Endothelial cell of umbilical vein (primary cell): ENCODE measurements at regions of chr4 and their contacts with region 1.

Region 1: DNA sequence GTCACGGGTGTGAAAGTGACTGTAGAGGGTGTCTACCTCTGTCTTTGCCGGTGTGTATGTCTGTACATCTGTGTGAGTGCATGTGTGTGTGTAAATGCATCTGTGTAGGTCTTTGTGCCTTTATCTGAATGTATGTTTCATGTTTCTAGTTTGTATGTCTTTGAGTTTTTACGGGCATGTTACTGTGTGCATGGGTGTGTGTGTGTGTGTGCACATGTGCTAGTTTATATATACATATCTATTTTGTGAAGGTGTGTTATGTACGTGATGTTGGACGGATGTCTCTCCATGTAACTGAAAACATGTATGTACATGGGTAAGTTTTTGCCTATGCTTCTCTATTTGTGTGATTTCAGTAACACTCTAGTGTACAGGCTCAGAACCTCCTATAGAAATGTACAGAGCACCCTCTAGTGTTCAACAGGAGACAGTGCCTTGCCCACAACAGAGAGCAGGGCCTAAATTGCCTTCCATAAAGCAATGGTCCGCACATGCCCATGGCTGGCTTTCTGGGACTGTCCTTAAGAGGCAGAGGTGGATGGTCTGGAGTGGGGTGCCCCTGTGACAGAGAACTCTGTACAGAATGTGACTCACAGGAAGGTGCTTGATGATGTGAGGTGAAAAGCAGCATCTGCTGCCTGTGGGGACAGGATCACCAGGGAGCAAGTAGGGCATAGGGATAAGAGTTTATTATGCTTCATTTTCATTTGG is 343.5 kb downstream of the RAPGEF2 start:
- DNase-seq: peak; percentile 76
- H3K4me3 ChIP-seq: no peak overlapping the region
- H3K27ac ChIP-seq: no peak overlapping the region
- H3K4me1 ChIP-seq: no peaks in the 10 kb centered on the region
- H3K27me3 ChIP-seq: no peaks in the 10 kb centered on the region
- CTCF ChIP-seq: peak; percentile 78 to 81
- POLR2A ChIP-seq: no peak

Region 2: GRCh38 chr4:158729716-158730559 is 716.5 kb before region 1 on chr4:
- CTCF ChIA-PET with region 1: interaction called, 3 read pairs
- POLR2A ChIA-PET with region 1: no interaction called
- dilution Hi-C with region 1: no loop called
- intact Hi-C with region 1: loop called (anchors 1 kb)
- DNase-seq: peak; percentile 84
- H3K4me3 ChIP-seq: no peak overlapping the region
- H3K27ac ChIP-seq: no peak overlapping the region
- H3K4me1 ChIP-seq: no peaks in the 10 kb centered on the region
- H3K27me3 ChIP-seq: peaks cover 9 to 14% of the 10 kb centered on the region in 2 experiments
- CTCF ChIP-seq: peak; percentile 71 to 78
- POLR2A ChIP-seq: no peak

Region 3: DNA sequence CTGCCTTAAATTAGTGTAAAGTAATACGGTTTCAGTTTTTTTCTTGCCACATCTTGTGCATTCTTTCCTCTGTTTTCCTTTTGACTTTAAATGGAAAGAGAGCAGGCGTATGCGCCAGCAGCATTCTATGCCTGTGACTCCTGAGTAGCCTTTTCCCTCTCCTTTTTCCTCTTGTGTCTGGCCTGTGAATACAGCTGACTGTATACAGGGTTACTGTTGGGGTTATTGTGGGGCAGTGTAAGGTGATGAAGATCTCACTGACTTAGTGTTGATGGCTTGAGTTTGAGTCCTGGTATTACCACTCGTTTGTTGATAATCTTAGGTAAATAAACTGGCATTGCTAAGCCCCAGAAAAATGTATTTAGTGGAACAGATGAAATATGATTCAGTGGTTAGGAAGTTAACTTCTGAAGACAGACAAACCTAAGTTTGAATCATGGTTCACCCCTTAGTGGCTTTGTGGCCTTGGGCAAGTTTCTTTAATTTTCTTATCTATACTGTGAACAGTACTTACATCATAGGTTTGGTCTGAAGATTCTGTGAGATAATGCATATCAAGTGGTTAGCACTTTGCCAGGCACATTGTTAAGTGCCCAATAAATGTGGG is 572.5 kb before region 1 on chr4:
- CTCF ChIA-PET with region 1: no interaction called
- POLR2A ChIA-PET with region 1: no interaction called
- dilution Hi-C with region 1: no loop called
- intact Hi-C with region 1: loop called (anchors 5 kb)
- DNase-seq: peak; percentile 81
- H3K4me3 ChIP-seq: no peak overlapping the region
- H3K27ac ChIP-seq: peak overlapping the region; percentile 56
- H3K4me1 ChIP-seq: peaks cover 15% of the 10 kb centered on the region
- H3K27me3 ChIP-seq: no peaks in the 10 kb centered on the region
- CTCF ChIP-seq: no peak
- POLR2A ChIP-seq: no peak

Region 4: DNA sequence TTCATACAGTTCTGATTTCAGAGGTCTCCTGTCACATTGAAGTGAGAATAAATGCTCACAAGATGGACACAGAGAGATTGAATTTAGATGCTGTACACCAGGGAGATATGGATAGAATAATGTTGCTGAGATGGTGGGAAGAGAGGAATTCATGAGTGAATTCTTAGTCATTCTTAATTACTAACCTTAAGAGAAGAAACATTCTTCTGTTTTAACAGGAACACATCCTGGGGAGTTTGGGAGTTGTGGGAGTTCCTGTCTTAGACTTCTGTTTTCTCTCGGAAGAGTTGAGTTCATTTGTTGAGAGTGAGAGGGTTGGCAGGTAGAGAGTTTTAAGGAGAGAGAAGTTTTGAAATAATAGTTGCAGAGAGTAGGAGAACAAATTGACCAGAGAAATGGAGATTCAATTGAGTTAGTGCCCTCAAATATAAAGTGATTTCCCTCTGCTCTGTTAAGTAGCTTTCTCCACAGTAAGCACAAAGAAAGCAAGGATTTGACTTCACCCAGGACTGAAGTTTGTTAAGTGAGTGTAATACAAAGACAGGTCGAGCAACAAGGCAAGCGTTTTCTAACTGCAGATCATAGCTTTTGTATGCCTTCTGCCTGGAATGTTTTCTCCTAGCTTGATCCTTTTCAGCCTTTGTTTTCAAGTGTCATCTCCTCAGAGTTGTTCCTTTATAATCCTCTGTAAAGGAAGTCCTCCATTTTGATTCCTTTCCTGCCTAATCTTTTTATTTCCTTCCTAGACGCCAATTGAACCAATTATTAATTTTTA is 137.7 kb before region 1 on chr4:
- CTCF ChIA-PET with region 1: no interaction called
- POLR2A ChIA-PET with region 1: no interaction called
- dilution Hi-C with region 1: no loop called
- intact Hi-C with region 1: loop called (anchors 5 kb)
- DNase-seq: peak; percentile 54
- H3K4me3 ChIP-seq: no peak overlapping the region
- H3K27ac ChIP-seq: peak overlapping the region; percentile 38
- H3K4me1 ChIP-seq: peaks cover 18% of the 10 kb centered on the region
- H3K27me3 ChIP-seq: no peaks in the 10 kb centered on the region
- CTCF ChIP-seq: no peak
- POLR2A ChIP-seq: no peak

Region 5: GRCh38 chr4:159390648-159391047 is 55.8 kb before region 1 on chr4:
- CTCF ChIA-PET with region 1: interaction called, 3 read pairs
- POLR2A ChIA-PET with region 1: no interaction called
- dilution Hi-C with region 1: no loop called
- intact Hi-C with region 1: loop called (anchors 2 kb)
- DNase-seq: peak; percentile 94
- H3K4me3 ChIP-seq: no peak overlapping the region
- H3K27ac ChIP-seq: peak overlapping the region; percentile 93
- H3K4me1 ChIP-seq: peaks cover 13% of the 10 kb centered on the region
- H3K27me3 ChIP-seq: no peaks in the 10 kb centered on the region
- CTCF ChIP-seq: no peak
- POLR2A ChIP-seq: no peak